ENCODE measurements at regions of chr3 and their contacts with region 1.

Region 1: GRCh38 chr3:51974963-51975851 is at the start of gene ABHD14A:
- DNase-seq: peak; percentile 80
- H3K4me3 Mint-ChIP-seq: peak within 1 kb of the TSS; percentile 95
- H3K27ac Mint-ChIP-seq: peak within 1 kb of the TSS; percentile 90
- H3K4me1 Mint-ChIP-seq: peaks cover 42% of the 10 kb centered on the region
- H3K27me3 Mint-ChIP-seq: no peaks in the 10 kb centered on the region

Region 2: GRCh38 chr3:51963951-51964451 is 11.2 kb before region 1 on chr3:
- CTCF ChIA-PET with region 1: interaction called, 12 read pairs
- DNase-seq: no peak
- H3K4me3 Mint-ChIP-seq: no peak overlapping the region
- H3K27ac Mint-ChIP-seq: no peak overlapping the region
- H3K4me1 Mint-ChIP-seq: peaks cover 19% of the 10 kb centered on the region
- H3K27me3 Mint-ChIP-seq: peaks cover 64% of the 10 kb centered on the region

Region 3: GRCh38 chr3:52108302-52109232 is 133.4 kb after region 1 on chr3:
- CTCF ChIA-PET with region 1: no interaction called
- DNase-seq: no peak
- H3K4me3 Mint-ChIP-seq: no peak overlapping the region
- H3K27ac Mint-ChIP-seq: no peak overlapping the region
- H3K4me1 Mint-ChIP-seq: peaks cover 2% of the 10 kb centered on the region
- H3K27me3 Mint-ChIP-seq: no peaks in the 10 kb centered on the region